ENCODE measurements at regions of chr19 and their contacts with region 1.

Region 1: DNA sequence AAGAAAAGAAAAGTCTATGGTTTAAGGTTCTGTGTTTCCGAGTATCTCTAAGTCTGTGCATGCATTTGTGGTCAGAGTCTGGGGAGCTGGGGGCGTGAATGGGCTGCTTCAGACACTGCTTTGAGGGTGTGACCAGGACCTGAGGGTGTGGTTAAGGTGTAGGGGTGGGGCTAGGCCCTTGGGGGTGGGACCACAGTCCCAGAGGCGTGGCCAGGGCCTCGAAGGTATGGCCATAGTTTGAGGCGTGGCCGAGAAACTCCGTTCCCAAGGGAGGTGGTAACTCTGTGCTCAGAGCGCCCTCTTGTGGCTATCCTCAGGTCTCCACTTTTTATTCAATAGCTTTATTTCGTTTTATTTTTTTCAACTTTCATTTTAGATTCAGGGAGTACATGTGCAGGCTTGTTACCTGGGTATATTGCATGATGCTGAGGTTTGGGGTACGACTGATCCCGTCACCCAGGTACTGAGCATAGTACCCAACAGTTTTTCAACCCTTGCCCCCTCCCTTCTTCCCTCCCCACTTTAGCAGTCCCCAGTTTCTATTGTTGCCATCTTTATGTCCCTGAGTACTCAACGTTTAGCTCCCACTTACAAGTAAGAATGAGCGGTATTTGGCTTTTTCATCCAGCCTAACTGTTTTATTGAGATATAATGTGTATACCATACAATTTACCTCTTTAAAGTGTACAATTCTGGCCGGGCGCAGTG is 7.0 kb upstream of the CBLC start:
- DNase-seq: peak; percentile 99
- ATAC-seq: peak; percentile 99
- H3K4me3 Mint-ChIP-seq: peak overlapping the region; percentile 46
- H3K27ac Mint-ChIP-seq: peak overlapping the region; percentile 85
- H3K4me1 Mint-ChIP-seq: peaks cover 40% of the 10 kb centered on the region
- H3K27me3 Mint-ChIP-seq: peaks cover 8% of the 10 kb centered on the region

Region 2: GRCh38 chr19:44570984-44571684 is 199.6 kb before region 1 on chr19:
- CTCF ChIA-PET with region 1: interaction called, 12 read pairs
- POLR2A ChIA-PET with region 1: no interaction called
- DNase-seq: peak; percentile 75
- ATAC-seq: peak; percentile 76
- H3K4me3 Mint-ChIP-seq: no peak overlapping the region
- H3K27ac Mint-ChIP-seq: no peak overlapping the region
- H3K4me1 Mint-ChIP-seq: no peaks in the 10 kb centered on the region
- H3K27me3 Mint-ChIP-seq: peaks cover 9% of the 10 kb centered on the region

Region 3: DNA sequence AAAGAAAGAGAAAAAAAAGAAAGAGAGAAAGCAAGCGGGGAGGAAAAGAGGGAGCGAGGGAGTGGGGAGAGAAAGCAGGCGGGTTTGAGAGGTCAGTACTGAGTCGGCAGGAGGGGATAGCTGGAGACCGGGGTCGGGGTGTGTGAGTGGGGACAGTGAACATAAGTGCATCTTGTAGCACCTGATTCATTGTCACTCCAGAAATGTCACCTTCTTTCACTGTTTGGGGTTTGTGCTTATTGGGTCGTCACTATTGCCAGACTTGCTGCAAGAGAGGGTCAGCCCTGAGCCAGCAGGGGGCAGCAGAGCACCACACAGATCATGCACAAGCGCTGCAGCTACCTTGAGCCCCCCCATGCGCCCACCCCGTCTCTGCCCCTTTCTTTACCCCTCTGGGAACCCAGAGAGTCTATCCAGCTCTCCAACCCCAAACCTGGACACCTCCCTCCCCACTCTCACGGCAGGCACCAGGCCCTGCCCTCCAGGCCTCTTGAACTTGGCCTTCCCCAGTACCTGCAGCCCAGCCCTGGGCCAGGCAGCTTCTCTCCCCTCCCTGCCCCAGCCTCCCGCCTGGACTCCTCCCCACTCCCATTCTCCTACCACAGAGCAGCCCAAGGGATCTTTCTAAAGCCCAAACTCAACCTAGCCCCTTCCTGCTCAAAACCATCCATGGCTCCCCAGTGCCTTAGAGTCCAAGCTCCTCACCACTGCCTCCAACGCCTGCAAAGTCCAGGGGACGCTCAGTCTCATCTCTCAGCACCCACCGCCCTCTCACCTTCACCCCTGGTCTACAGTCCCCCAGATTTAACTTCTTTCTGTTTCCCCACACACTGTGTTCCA is 81.4 kb before region 1 on chr19:
- CTCF ChIA-PET with region 1: interaction called, 149 read pairs
- POLR2A ChIA-PET with region 1: interaction called, 3 read pairs
- DNase-seq: peak; percentile 85
- ATAC-seq: peak; percentile 68
- H3K4me3 Mint-ChIP-seq: no peak overlapping the region
- H3K27ac Mint-ChIP-seq: peak overlapping the region; percentile 55
- H3K4me1 Mint-ChIP-seq: peaks cover 39% of the 10 kb centered on the region
- H3K27me3 Mint-ChIP-seq: peaks cover 22% of the 10 kb centered on the region

Region 4: DNA sequence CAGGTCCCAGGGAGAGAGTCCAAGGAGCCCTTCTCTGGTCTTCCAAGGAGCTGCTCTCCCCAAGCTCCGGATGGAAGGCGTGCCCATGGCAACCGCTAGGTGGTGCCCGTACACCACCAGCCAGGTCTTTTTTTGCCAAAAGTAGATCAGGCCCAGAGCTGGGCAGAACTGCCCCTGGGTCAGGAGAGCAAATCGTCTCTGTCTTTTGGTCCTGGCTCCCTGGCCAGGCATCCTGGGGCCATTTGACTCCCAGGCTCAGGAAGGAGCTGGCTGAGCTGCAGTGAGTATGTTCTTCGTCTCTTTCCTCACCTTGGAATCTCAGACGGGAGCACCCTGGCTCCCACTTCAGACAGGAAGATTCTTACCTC is 46.8 kb before region 1 on chr19:
- CTCF ChIA-PET with region 1: interaction called, 455 read pairs
- POLR2A ChIA-PET with region 1: interaction called, 28 read pairs
- DNase-seq: peak; percentile 83
- ATAC-seq: peak; percentile 94
- H3K4me3 Mint-ChIP-seq: no peak overlapping the region
- H3K27ac Mint-ChIP-seq: no peak overlapping the region
- H3K4me1 Mint-ChIP-seq: peaks cover 50% of the 10 kb centered on the region
- H3K27me3 Mint-ChIP-seq: peaks cover 3% of the 10 kb centered on the region

Region 5: DNA sequence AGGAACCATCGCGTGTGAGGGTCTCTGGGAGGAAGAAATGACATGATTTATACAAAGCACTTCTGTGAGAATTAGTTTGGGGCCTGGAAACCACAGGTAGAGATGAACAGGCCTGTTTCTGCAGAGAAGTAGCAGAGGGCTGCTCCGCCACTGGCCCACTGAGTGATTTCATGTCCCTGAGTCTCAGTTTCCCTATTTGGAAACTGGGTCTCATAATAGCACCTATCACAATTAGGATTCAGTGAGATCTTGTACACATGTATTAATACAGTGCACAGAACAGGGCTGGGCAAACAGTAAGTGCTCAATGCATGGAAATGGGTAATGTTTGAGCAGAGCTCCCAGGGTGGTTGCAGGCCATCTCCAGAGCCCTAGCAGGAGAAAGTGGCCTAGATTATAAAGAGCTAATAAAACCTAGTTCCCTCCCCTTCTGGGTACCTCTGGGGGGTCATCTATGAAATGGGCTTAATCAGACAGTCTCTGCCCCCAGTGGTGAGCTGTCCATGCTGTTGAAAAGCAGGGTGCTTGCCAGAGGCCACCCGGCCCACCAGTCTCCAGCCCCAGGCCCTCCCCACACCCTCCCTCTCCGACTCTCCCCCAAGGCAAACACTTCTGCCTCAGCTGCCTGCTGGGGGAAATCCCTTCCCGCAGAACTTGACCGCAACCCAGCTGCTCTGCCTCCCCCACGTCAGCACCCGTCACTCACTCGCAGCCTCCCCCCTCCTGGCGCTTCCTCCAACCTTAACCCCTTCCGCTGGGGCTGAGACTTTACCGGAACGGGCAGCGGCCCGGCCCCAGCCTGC is 17.7 kb before region 1 on chr19:
- CTCF ChIA-PET with region 1: interaction called, 56 read pairs
- POLR2A ChIA-PET with region 1: interaction called, 6 read pairs
- DNase-seq: peak; percentile 98
- ATAC-seq: peak; percentile 78
- H3K4me3 Mint-ChIP-seq: peak overlapping the region; percentile 89
- H3K27ac Mint-ChIP-seq: peak overlapping the region; percentile 96
- H3K4me1 Mint-ChIP-seq: peaks cover 68% of the 10 kb centered on the region
- H3K27me3 Mint-ChIP-seq: no peaks in the 10 kb centered on the region

Region 6: DNA sequence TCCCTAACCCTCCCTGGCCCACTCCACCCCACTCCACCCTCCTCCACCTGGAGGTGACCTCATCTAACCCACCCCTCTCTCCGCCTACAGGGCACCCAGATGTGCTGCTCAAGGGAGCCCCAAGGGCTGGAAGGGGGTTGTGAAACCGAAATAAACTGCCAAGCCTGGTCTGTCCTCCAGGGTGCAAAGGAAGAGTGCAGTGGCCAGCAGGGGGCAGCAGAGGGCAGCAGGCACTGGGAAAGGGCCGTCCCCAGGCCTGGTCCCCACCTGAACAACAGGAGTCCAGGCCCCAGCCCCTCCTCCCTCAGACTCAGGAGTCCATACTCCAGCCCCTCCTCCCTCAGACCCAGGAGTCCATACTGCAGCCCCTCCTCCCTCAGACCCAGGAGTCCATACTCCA is 29.8 kb after region 1 on chr19:
- CTCF ChIA-PET with region 1: interaction called, 13 read pairs
- POLR2A ChIA-PET with region 1: interaction called, 3 read pairs
- DNase-seq: peak; percentile 93
- ATAC-seq: peak; percentile 100
- H3K4me3 Mint-ChIP-seq: no peak overlapping the region
- H3K27ac Mint-ChIP-seq: no peak overlapping the region
- H3K4me1 Mint-ChIP-seq: peaks cover 27% of the 10 kb centered on the region
- H3K27me3 Mint-ChIP-seq: no peaks in the 10 kb centered on the region

Region 7: GRCh38 chr19:44813070-44813840 is 42.6 kb after region 1 on chr19:
- CTCF ChIA-PET with region 1: no interaction called
- POLR2A ChIA-PET with region 1: no interaction called
- DNase-seq: no peak
- ATAC-seq: no peak
- H3K4me3 Mint-ChIP-seq: no peak overlapping the region
- H3K27ac Mint-ChIP-seq: no peak overlapping the region
- H3K4me1 Mint-ChIP-seq: peaks cover 1% of the 10 kb centered on the region
- H3K27me3 Mint-ChIP-seq: peaks cover 4% of the 10 kb centered on the region